K562 (cell line): ENCODE measurements at regions of chr6 and their contacts with region 1.

Region 1: DNA sequence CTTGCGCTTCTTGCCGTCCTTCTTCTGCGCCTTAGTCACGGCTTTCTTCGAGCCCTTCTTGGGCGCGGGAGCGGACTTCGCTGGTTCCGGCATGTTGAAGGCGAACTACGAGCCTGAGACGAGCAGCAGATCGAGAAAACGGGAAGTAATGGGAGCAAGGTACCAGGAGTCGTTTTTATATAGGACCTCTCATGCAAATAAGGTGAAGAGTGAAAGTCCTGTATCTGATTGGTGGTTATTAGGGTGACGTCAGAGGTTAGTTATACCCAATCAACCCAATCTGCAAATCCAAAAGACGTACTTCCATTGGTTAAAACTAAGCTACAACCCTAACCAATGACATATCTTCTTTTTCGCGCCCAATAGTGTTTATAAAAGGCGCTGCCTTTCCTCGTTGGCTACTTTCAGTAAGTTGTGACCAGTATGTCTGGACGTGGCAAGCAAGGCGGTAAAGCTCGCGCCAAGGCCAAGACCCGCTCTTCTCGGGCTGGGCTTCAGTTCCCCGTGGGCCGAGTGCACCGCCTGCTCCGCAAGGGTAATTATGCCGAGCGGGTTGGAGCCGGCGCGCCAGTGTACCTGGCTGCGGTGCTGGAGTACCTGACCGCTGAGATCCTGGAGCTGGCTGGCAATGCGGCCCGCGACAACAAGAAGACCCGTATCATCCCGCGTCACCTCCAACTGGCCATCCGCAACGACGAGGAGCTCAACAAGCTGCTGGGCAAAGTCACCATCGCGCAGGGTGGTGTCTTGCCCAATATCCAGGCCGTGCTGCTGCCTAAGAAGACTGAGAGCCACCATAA is 100.6 kb upstream of the PRSS16 start:
- DNase-seq: peak; percentile 93 to 99 (median 98)
- ATAC-seq: peak; percentile 68
- H3K4me3 ChIP-seq: peak overlapping the region; percentile 71
- H3K27ac ChIP-seq: peak overlapping the region; percentile 94
- H3K4me1 ChIP-seq: peaks cover 4 to 13% of the 10 kb centered on the region in 2 experiments
- H3K27me3 ChIP-seq: no peaks in the 10 kb centered on the region
- CTCF ChIP-seq: no peak
- EP300 ChIP-seq: no peak; the same call in 1 of the 2 replicates
- POLR2A ChIP-seq: peak; percentile 100
- RAD21 ChIP-seq: no peak; a peak in 1 of 4 replicates

Region 2: DNA sequence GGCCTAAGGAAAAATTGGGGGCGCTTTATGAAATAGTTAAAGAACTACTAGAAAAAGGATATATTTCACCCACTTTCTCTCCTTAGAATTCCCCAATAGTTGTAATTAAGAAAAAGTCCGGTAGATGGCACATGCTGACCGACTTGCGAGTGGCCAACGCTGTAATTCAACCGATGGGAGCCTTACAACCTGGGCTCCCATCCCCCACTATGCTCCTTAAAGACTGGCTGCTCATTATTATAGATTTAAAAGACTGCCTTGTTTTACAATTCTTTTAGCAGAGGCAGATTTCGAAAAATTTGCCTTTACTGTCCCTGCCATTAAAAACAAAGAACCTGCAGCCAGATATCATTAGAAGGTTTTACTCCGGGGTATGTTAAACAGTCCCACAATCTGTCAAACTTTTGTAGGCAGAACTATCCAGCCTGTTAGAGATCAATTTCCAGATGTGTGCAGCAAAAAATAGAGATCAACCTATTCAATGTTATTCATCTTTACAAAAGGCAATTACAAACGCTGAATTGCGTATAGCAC is 42.0 kb after region 1 on chr6:
- CTCF ChIA-PET with region 1: no interaction called
- POLR2A ChIA-PET with region 1: interaction called, 10 read pairs
- in situ Hi-C with region 1: no loop called
- intact Hi-C with region 1: no loop called
- DNase-seq: peak; percentile 69 to 93 (median 78)
- ATAC-seq: peak; percentile 85
- H3K4me3 ChIP-seq: peak overlapping the region; percentile 56
- H3K27ac ChIP-seq: peak overlapping the region; percentile 80
- H3K4me1 ChIP-seq: peaks cover 8% of the 10 kb centered on the region in 2 experiments; a peak in 4 of 5 replicates
- H3K27me3 ChIP-seq: no peaks in the 10 kb centered on the region
- CTCF ChIP-seq: peak; percentile 78 to 92 (median 85)
- EP300 ChIP-seq: no peak; the same call in 1 of the 2 replicates
- POLR2A ChIP-seq: no peak
- RAD21 ChIP-seq: peak; percentile 93 to 95

Region 3: GRCh38 chr6:27472617-27473400 is 325.9 kb after region 1 on chr6 and contains the start of gene ZNF184:
- CTCF ChIA-PET with region 1: no interaction called
- POLR2A ChIA-PET with region 1: interaction called, 10 read pairs
- in situ Hi-C with region 1: no loop called
- intact Hi-C with region 1: no loop called
- DNase-seq: peak; percentile 97 to 100 (median 98)
- ATAC-seq: peak; percentile 91
- H3K4me3 ChIP-seq: peak within 1 kb of the TSS; percentile 75
- H3K27ac ChIP-seq: peak within 1 kb of the TSS; percentile 91
- H3K4me1 ChIP-seq: peaks cover 8 to 11% of the 10 kb centered on the region in 2 experiments; a peak in 4 of 5 replicates
- H3K27me3 ChIP-seq: no peaks in the 10 kb centered on the region
- CTCF ChIP-seq: peak; percentile 31 to 42 (median 37); a peak in 5 of 6 replicates
- EP300 ChIP-seq: peak; percentile 92
- POLR2A ChIP-seq: peak; percentile 92
- RAD21 ChIP-seq: peak; percentile 10 to 18; a peak in 2 of 4 replicates
- polyA plus RNA-seq, gene ZNF184: 7.6 to 12.8 TPM

Region 4: DNA sequence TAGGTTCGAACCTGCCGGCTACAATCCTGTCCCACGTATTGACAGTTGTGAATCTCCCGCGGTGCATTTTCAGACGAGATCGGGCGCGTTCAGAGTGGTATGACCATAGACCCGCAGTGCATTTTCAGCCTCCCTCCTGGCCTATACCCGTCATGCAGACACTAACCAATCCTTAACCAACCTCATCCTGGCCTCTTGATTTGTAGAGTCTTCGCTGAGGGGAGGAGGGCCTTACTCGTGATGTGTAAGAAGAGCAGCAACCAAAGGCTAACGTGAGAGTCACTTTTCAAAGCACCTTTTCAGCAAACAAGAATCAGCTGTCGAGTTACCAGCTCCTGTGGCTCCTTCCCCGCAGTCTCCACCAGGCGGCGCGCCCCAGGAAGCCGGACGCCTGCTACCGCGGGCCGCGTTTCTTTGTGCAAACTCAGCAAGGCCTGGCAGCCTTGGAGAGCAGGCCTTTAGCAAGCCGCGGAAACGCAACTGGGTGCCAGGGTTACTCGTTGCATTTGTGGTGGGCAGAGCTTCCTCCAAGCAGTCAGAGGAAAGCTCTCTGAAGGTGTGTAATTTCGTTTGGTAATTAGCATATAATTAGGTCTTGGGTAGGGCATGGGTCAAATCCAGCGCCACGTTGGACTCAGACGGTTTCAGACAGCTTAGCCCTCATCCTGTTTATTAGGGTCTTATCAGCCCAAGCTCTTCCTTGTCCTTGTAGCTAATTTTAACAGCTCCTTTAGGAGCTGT is 625.5 kb after region 1 on chr6:
- CTCF ChIA-PET with region 1: no interaction called
- POLR2A ChIA-PET with region 1: interaction called, 14 read pairs
- in situ Hi-C with region 1: no loop called
- intact Hi-C with region 1: no loop called
- DNase-seq: peak; percentile 83 to 95 (median 84)
- ATAC-seq: peak; percentile 92
- H3K4me3 ChIP-seq: no peak overlapping the region
- H3K27ac ChIP-seq: peak overlapping the region; percentile 75
- H3K4me1 ChIP-seq: peaks cover 22 to 40% of the 10 kb centered on the region in 2 experiments
- H3K27me3 ChIP-seq: no peaks in the 10 kb centered on the region
- CTCF ChIP-seq: peak; percentile 97 to 99 (median 97)
- EP300 ChIP-seq: peak; percentile 35
- POLR2A ChIP-seq: no peak
- RAD21 ChIP-seq: peak; percentile 94 to 97

Region 5: DNA sequence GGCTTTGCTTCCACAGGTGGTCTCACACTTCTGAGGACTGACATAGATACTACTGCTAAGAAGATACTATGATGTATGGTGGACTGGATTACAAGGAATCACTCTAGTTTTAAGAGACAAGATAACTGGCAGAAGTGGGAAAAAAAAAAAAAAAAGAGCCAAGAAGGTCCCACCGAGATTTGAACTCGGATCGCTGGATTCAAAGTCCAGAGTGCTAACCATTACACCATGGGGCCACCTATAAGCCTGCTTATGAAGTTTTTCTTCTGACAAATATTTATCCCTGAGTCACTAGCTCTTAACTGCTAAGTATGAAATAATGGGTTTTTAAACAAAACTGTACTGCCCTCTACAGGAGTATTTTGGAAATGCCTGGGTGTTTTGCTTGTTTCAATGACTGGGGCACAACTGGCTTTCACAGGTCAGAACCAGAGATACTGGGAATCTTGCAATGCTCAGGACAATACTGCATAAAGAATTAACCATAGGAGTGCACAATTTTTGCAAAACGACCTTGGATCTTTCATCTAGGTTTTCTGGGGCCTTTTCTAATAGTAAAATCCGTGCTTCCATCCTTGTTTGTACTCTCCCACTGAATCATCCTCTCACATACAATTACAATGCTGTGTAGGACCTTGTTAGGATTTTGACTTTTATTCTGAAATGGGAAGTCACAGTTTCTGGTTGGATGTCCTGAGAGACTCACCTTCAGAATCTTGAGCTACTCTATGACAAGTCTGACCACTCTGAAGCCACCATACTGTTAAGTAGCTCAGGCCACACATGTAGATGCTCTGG is 649.0 kb after region 1 on chr6:
- CTCF ChIA-PET with region 1: no interaction called
- POLR2A ChIA-PET with region 1: interaction called, 18 read pairs
- in situ Hi-C with region 1: no loop called
- intact Hi-C with region 1: no loop called
- DNase-seq: peak; percentile 66 to 93 (median 74)
- ATAC-seq: peak; percentile 53
- H3K4me3 ChIP-seq: no peak overlapping the region
- H3K27ac ChIP-seq: peak overlapping the region; percentile 2; the same call in 1 of the 3 replicates
- H3K4me1 ChIP-seq: peaks cover 13 to 55% of the 10 kb centered on the region in 2 experiments
- H3K27me3 ChIP-seq: no peaks in the 10 kb centered on the region
- CTCF ChIP-seq: peak; percentile 70 to 95 (median 88); a peak in 5 of 6 replicates
- EP300 ChIP-seq: peak; percentile 81
- POLR2A ChIP-seq: no peak
- RAD21 ChIP-seq: peak; percentile 82 to 89

Region 6: DNA sequence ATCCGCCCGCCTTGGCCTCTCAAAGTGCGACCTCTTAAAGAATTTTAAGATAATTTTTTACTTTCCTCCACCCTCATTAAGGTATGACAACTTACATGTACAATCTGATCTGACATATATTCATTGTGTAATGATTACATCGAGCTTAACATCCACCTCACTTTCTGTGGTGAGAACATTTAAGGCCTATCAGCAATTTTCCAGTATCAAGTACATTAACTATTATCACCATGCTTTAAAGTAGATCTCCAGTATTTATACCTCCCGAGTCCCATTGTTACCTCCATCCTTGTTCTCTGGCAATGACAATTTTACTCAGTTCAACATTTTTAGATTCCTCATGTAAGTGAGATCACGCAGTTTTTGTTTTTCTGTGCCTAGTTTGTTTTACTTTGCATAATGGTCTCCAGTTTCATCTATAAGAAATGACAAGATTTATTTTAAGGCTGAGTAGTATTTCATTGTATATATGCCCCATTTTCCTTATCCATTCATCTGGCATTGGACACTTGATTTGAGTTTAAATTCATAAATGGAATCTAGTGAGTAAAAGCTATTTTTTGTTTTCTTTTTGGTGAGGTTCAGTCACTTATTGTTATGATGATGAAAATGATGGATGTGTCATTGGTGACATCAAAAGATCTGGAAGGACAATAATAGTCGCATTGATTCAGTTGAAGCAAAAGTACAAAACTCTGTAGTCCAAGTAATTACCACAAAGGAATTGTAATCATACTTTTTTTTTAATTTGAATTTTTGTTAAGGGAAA is 678.3 kb after region 1 on chr6:
- CTCF ChIA-PET with region 1: no interaction called
- POLR2A ChIA-PET with region 1: interaction called, 13 read pairs
- in situ Hi-C with region 1: no loop called
- intact Hi-C with region 1: no loop called
- DNase-seq: peak in 1 of 4 experiments; percentile 12
- ATAC-seq: no peak
- H3K4me3 ChIP-seq: peak overlapping the region; percentile 50
- H3K27ac ChIP-seq: peak overlapping the region; percentile 83
- H3K4me1 ChIP-seq: peaks cover 0 to 8% of the 10 kb centered on the region in 2 experiments; a peak in 3 of 5 replicates
- H3K27me3 ChIP-seq: no peaks in the 10 kb centered on the region
- CTCF ChIP-seq: no peak
- EP300 ChIP-seq: no peak
- POLR2A ChIP-seq: peak; percentile 38
- RAD21 ChIP-seq: no peak